ENCODE measurements at regions of chr17 and their contacts with region 1.

Region 1: GRCh38 chr17:19362277-19363113 is at the start of gene B9D1:
- DNase-seq: peak; percentile 90
- H3K4me3 ChIP-seq: peak within 1 kb of the TSS; percentile 96
- H3K27ac ChIP-seq: peak within 1 kb of the TSS; percentile 89
- H3K4me1 ChIP-seq: peaks cover 18% of the 10 kb centered on the region
- H3K27me3 ChIP-seq: no peaks in the 10 kb centered on the region
- CTCF ChIP-seq: peak; percentile 98
- total RNA-seq, gene B9D1: 8.8 TPM

Region 2: GRCh38 chr17:19418251-19418992 is 55.9 kb after region 1 on chr17:
- intact Hi-C with region 1: no loop called
- DNase-seq: no peak
- H3K4me3 ChIP-seq: no peak overlapping the region
- H3K27ac ChIP-seq: peak overlapping the region; percentile 30
- H3K4me1 ChIP-seq: no peaks in the 10 kb centered on the region
- H3K27me3 ChIP-seq: no peaks in the 10 kb centered on the region
- CTCF ChIP-seq: no peak

Region 3: DNA sequence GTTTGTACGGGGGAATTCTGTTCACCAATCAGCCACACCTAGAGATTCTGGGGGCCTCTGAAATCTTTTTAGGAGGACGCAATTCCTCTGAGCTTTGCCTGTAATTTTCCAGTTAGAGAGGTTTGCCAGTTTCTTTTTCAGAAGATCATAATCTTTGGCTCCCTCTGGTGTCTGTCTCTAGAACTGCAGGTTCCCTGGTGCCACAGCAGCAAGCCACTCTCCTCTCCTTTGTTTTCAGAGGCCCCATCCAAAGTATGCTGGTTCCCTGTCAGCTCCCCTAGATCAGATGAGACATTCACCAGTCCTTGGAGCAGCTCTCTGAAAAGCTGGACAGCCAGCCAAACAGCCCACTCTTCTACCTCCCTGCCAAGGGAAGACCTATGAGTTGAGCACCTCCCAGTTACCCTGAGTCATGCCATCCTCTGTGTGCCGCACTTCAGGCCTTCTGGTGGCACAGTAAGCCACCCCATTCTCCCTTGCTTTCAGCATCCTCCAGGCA is 84.6 kb after region 1 on chr17:
- intact Hi-C with region 1: loop called (anchors 2 kb)
- DNase-seq: no peak
- H3K4me3 ChIP-seq: no peak overlapping the region
- H3K27ac ChIP-seq: peak overlapping the region; percentile 49
- H3K4me1 ChIP-seq: no peaks in the 10 kb centered on the region
- H3K27me3 ChIP-seq: peaks cover 9% of the 10 kb centered on the region
- CTCF ChIP-seq: peak; percentile 97